Activated CD8-positive, alpha-beta T cell treated with anti-CD3 and anti-CD28 coated beads for 36 hours (primary cell): ENCODE measurements at regions of chr2 and their contacts with region 1.

Region 1: DNA sequence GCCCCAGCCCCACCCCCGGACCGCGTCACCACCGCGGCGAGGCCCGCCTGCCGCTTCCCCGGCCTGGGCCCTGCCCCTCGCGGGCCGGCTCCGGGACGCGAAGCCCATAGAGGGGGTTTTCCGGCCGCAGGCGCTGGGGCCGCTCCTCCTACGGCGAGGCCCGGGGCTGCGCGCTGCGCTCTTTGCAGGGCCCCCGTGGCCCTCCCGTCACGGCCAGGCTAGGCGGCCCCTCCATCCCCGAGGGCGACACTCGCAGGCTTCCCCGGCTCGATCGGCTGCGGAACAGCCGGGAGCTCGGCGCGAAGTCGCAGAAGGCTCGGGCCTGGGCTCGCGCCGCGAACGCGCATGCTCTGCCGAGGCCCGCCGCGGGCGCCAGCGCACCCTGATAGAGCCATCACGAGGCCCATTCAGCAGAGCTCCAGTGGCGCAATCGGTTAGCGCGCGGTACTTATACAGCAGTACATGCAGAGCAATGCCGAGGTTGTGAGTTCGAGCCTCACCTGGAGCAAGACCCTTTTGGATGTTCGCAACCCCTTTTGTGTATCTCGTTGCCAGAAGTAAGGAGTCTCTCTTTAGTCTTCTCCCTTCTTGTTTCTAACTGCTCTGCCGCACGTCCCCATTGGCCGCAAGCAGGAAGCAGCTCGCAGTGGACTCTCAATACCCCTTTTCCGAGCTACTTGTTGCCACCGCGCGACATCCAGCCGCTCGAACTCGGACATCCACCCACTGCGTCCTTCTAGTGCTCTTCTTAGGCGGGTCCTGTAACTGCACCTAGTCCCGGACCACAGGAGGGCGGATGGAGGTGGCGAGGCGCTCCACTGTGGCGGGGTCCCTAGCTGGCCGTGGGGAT is 18.0 kb upstream of the HAAO start:
- DNase-seq: peak; percentile 97
- ATAC-seq: peak; percentile 81
- H3K4me3 Mint-ChIP-seq: peak overlapping the region; percentile 90
- H3K27ac Mint-ChIP-seq: peak overlapping the region; percentile 99
- H3K4me1 Mint-ChIP-seq: peaks cover 13% of the 10 kb centered on the region
- H3K27me3 Mint-ChIP-seq: no peaks in the 10 kb centered on the region
- CTCF ChIP-seq: no peak

Region 2: GRCh38 chr2:42513257-42513918 is 297.0 kb before region 1 on chr2:
- CTCF ChIA-PET with region 1: no interaction called
- POLR2A ChIA-PET with region 1: no interaction called
- intact Hi-C with region 1: no loop called
- DNase-seq: peak; percentile 15
- ATAC-seq: peak; percentile 39
- H3K4me3 Mint-ChIP-seq: no peak overlapping the region
- H3K27ac Mint-ChIP-seq: no peak overlapping the region
- H3K4me1 Mint-ChIP-seq: peaks cover 12% of the 10 kb centered on the region
- H3K27me3 Mint-ChIP-seq: no peaks in the 10 kb centered on the region
- CTCF ChIP-seq: peak; percentile 60

Region 3: GRCh38 chr2:42792583-42793333 is 17.6 kb before region 1 on chr2 and contains the start of gene HAAO:
- CTCF ChIA-PET with region 1: interaction called, 9 read pairs
- POLR2A ChIA-PET with region 1: interaction called, 45 read pairs
- intact Hi-C with region 1: no loop called
- DNase-seq: no peak
- ATAC-seq: peak; percentile 21
- H3K4me3 Mint-ChIP-seq: peak within 1 kb of the TSS; percentile 73
- H3K27ac Mint-ChIP-seq: peak within 1 kb of the TSS; percentile 47
- H3K4me1 Mint-ChIP-seq: peaks cover 46% of the 10 kb centered on the region
- H3K27me3 Mint-ChIP-seq: peaks cover 36% of the 10 kb centered on the region
- CTCF ChIP-seq: no peak
- total RNA-seq, gene HAAO: 0.63 to 1.0 TPM

Region 4: DNA sequence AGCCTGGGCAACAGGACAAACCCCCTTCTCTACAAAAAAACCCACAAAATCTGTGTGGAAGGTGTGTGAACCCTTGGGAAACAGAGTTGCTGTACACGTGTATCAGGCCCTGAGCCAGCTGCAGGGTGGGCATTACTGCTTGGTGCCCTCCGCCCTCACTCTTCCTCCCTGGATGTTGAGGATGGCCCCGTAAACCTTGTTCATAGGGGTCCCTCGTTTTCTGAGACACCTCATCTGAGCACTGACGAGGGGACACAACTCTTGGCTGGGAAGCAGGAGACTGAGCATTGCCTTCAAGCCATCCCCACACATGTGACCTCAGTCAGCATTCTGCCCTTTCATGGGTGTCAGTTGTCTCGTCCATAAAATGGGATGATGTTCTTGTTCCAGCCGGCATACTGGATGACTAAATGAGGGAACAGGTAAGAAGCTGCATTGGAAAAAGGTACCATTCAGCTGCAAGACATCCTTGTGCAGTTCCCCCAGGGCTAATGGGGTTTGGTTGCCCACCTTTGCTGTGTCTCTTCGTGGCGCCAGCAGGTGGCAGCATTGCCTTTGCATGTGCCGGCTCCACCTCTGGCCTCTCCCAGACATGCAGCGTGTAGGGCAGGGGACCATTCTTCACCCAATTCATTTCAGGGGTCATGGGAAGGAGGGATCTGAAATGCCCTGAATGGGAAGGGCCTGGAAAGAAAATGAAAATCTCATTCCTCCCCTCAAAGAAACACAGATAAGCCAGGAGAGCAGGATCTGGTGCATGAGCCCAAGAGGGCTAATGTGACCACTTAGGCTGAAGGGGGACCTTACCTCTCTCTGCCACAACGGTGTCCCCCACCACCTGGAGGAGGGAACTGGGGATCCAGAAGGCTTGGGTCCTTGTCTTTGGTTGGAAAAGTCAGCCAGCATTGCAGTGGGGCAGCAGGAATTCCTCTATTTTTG is 18.4 kb after region 1 on chr2:
- CTCF ChIA-PET with region 1: interaction called, 20 read pairs
- POLR2A ChIA-PET with region 1: interaction called, 9 read pairs
- intact Hi-C with region 1: no loop called
- DNase-seq: peak; percentile 79
- ATAC-seq: peak; percentile 95
- H3K4me3 Mint-ChIP-seq: no peak overlapping the region
- H3K27ac Mint-ChIP-seq: no peak overlapping the region
- H3K4me1 Mint-ChIP-seq: peaks cover 16% of the 10 kb centered on the region
- H3K27me3 Mint-ChIP-seq: peaks cover 3% of the 10 kb centered on the region
- CTCF ChIP-seq: peak; percentile 85